Ascending aorta (tissue), 2 donors: ENCODE measurements at regions of chr4 and their contacts with region 1.

Region 1: GRCh38 chr4:112145326-112145819 is at the start of gene FAM241A:
- DNase-seq: peak; percentile 62 to 94
- H3K4me3 ChIP-seq: peak within 1 kb of the TSS; percentile 76 to 96
- H3K27ac ChIP-seq: peak within 1 kb of the TSS; percentile 77 to 89
- H3K4me1 ChIP-seq: peaks cover 0 to 5% of the 10 kb centered on the region in 2 donors
- H3K27me3 ChIP-seq: no peaks in the 10 kb centered on the region
- CTCF ChIP-seq: no peak
- total RNA-seq, gene FAM241A: 6.8 TPM

Region 2: GRCh38 chr4:112099701-112100297 is 45.6 kb before region 1 on chr4:
- intact Hi-C with region 1: loop called (anchors 5 kb)
- DNase-seq: no peak
- H3K4me3 ChIP-seq: no peak overlapping the region
- H3K27ac ChIP-seq: no peak overlapping the region
- H3K4me1 ChIP-seq: no peaks in the 10 kb centered on the region
- H3K27me3 ChIP-seq: no peaks in the 10 kb centered on the region
- CTCF ChIP-seq: peak; percentile 32 to 68 (median 63)

Region 3: GRCh38 chr4:112127803-112128202 is 17.6 kb before region 1 on chr4:
- intact Hi-C with region 1: loop called (anchors 2 kb)
- DNase-seq: no peak
- H3K4me3 ChIP-seq: no peak overlapping the region
- H3K27ac ChIP-seq: peak overlapping the region in 1 of 2 donors; percentile 44
- H3K4me1 ChIP-seq: peaks cover 0 to 4% of the 10 kb centered on the region in 2 donors
- H3K27me3 ChIP-seq: no peaks in the 10 kb centered on the region
- CTCF ChIP-seq: no peak

Region 4: GRCh38 chr4:112284662-112285411 is 139.5 kb after region 1 on chr4:
- intact Hi-C with region 1: loop called (anchors 5 kb)
- DNase-seq: no peak
- H3K4me3 ChIP-seq: peak overlapping the region; percentile 75 to 82
- H3K27ac ChIP-seq: peak overlapping the region; percentile 80 to 82
- H3K4me1 ChIP-seq: peaks cover 0 to 5% of the 10 kb centered on the region in 2 donors
- H3K27me3 ChIP-seq: no peaks in the 10 kb centered on the region
- CTCF ChIP-seq: no peak

Region 5: DNA sequence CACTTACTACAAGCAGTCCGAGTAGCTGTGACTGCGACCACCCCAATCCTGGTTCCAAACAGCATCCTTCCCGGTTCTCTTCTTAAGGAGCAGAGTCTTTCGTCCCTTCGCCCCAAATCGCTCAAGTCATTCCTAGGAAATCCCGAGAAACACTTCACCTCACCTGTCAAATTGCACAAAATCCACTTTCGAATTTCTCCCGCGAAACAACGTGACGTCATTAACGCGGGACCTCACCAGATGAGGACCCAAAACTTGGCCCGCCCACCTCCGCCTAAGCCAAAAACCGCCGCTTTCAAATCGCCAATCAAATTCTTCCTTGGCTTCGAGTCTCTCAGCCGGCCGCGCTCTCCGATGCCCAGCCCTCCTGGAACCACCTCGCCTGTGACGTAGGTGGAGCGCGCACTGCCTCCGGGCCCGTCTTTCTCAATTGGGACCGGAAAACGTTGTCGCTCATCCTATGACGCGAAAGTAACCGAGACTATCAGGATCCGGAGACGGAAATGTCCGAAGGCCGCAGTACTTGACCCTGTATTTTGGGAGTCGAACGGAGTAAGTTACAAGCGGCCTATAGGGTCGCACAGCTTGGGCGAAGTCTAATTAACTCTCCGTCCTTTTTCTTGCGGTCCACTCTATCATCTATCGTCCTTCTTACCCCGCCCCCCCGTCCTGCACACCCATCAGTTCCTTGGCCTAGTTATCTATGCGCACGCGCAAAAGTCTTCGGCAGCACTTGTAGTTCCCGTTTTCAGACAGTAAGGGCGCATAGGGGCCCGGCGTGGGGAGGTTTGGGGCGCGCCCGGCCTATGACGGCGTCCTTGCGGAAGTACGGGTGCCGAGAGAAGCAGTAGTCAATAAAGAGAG is 491.5 kb after region 1 on chr4 and contains the starts of genes LARP7 and ZGRF1:
- intact Hi-C with region 1: loop called (anchors 5 kb)
- DNase-seq: peak; percentile 97 to 100
- H3K4me3 ChIP-seq: peak within 1 kb of the TSS; percentile 67 to 82
- H3K27ac ChIP-seq: peak within 1 kb of the TSS; percentile 94 to 98
- H3K4me1 ChIP-seq: peaks cover 0 to 11% of the 10 kb centered on the region in 2 donors
- H3K27me3 ChIP-seq: no peaks in the 10 kb centered on the region
- CTCF ChIP-seq: peak; percentile 97 to 100 (median 99)
- total RNA-seq, gene LARP7: 7.3 TPM
- total RNA-seq, gene ZGRF1: 0.11 TPM